Mammary epithelial cell (primary cell): ENCODE measurements at regions of chr1 and their contacts with region 1.

Region 1: DNA sequence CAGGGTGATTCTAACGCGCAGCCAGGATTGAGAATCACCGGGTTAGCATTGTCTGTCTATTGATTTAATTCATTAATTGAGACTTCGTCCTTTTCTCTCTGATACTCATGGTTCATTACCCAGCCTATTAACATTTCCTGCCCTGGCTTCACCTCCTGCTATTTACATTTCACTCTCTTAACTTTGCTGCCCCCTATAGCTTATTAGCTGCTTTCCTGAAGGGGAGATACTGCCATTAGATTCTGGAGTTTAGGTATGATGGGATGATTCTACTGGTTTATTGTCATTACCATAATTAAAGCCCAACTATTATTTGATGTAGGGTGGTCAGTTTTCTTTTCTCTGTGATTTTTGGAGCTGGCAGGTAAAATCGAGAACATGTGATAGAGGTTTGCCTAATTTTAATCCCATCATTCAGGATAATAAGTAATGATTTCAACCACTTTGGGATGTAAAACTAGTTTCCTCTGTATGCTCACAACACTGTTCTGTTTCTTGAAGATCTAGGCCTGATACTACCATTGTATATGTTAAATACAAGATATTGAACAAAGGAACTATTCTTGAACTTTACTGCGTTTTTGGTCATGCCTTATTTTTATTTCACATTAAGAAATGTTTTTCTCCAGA is 6.4 kb downstream of the PPP2R5A start:
- DNase-seq: peak; percentile 50
- H3K4me3 ChIP-seq: no peak overlapping the region
- H3K27ac ChIP-seq: no peak overlapping the region
- H3K4me1 ChIP-seq: peaks cover 35% of the 10 kb centered on the region
- H3K27me3 ChIP-seq: no peaks in the 10 kb centered on the region
- CTCF ChIP-seq: peak; percentile 68 to 81

Region 2: GRCh38 chr1:212317916-212318315 is 26.3 kb after region 1 on chr1:
- CTCF ChIA-PET with region 1: no interaction called
- dilution Hi-C with region 1: no loop called
- in situ Hi-C with region 1: no loop called
- intact Hi-C with region 1: no loop called
- DNase-seq: no peak
- H3K4me3 ChIP-seq: no peak overlapping the region
- H3K27ac ChIP-seq: no peak overlapping the region
- H3K4me1 ChIP-seq: peaks cover 3% of the 10 kb centered on the region
- H3K27me3 ChIP-seq: no peaks in the 10 kb centered on the region
- CTCF ChIP-seq: no peak

Region 3: GRCh38 chr1:212368073-212368484 is 76.5 kb after region 1 on chr1:
- CTCF ChIA-PET with region 1: no interaction called
- dilution Hi-C with region 1: no loop called
- in situ Hi-C with region 1: no loop called
- intact Hi-C with region 1: loop called (anchors 2 kb)
- DNase-seq: peak; percentile 54
- H3K4me3 ChIP-seq: no peak overlapping the region
- H3K27ac ChIP-seq: no peak overlapping the region
- H3K4me1 ChIP-seq: no peaks in the 10 kb centered on the region
- H3K27me3 ChIP-seq: no peaks in the 10 kb centered on the region
- CTCF ChIP-seq: peak; percentile 90 to 96

Region 4: DNA sequence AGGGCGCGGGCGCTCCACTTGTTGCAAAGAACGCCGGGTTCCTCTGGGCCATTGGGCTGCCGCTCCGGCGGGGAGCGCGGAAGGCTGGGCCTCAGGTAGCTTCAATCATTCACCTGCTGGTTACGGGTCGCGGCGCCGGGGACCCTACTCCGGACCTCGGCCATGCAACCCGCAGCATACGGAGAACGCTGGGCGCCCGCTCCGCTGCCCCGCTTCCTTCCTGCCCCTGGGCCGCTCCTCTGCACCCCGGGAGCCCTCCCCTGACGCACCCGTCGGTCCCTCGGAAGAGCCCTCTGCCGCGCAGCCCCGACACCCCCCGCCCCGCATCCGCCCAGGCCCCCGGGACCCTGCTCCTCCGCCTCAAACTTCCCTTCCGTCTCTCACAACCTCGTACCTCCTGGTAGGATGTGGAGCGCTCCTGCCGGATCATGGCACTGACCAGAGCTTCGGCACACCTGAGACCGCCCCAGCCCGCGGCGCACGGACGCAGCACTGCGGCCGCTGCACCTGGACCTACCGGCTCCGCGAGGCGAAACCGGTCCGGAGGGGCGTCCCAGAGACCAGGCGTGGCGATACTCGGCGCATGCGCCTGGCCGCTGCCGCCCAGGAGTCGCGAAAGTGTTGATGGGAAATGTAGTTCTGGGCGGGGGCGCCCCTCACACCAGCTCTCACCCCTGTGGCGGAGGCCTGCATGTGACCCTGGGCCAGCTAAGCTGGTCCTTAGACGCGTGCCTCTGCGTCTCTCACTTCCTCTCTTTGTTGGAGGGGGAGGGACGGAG is 122.9 kb after region 1 on chr1 and contains the start of gene PACC1:
- CTCF ChIA-PET with region 1: no interaction called
- dilution Hi-C with region 1: no loop called
- in situ Hi-C with region 1: no loop called
- intact Hi-C with region 1: no loop called
- DNase-seq: peak; percentile 78
- H3K4me3 ChIP-seq: peak within 1 kb of the TSS; percentile 71 to 95 (median 79)
- H3K27ac ChIP-seq: no peak within 1 kb of the TSS
- H3K4me1 ChIP-seq: peaks cover 9% of the 10 kb centered on the region
- H3K27me3 ChIP-seq: no peaks in the 10 kb centered on the region
- CTCF ChIP-seq: no peak
- total RNA-seq, gene PACC1: 10.2 to 10.7 TPM